Colonic mucosa (tissue), 4 donors: ENCODE measurements at regions of chr1 and their contacts with region 1.

Region 1: DNA sequence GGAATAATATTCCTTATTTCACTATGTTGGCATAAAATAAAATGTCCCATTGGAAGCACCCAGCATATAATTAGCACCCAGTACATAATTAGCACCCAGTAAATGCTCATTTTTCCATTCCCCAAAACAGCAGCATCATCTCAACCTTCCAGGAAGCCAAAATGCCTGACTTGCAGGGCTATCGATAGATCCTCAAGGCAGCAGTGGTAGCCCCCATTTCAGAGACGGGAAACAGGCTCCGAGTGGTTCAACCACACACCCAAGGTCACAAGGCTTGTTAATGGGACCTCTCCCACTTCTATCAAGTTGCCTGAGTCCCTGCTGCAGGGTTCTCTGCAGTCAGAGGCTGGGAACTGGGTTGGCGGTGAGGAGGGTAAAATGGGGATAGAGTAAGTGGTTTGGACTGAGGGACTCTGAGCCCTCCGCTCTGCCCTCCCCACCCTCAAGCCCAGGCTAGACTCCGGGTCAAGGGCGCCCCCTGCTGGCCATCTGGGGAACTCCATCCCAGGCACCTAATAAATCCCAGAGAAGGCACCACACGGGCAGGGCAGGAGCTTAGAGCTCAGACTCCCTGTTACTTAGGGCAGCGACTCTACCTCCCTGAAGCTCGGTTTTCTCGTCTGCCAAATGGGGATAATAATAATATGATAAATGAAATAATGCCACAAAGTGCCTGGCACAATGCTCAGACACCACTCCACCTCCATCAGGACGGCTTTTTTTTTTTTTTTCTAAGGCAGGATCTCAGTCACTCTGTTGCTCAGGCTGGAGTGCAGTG is 21.9 kb upstream of the LAPTM5 start:
- DNase-seq: peak; percentile 90
- H3K4me3 ChIP-seq: no peak overlapping the region
- H3K27ac ChIP-seq: no peak overlapping the region
- H3K4me1 ChIP-seq: no peaks in the 10 kb centered on the region
- H3K27me3 ChIP-seq: no peaks in the 10 kb centered on the region
- CTCF ChIP-seq: peak; percentile 98

Region 2: GRCh38 chr1:30718636-30719405 is 60.7 kb before region 1 on chr1:
- intact Hi-C with region 1: loop called (anchors 2 kb)
- DNase-seq: peak; percentile 88
- H3K4me3 ChIP-seq: peak overlapping the region; percentile 47
- H3K27ac ChIP-seq: peak overlapping the region; percentile 95
- H3K4me1 ChIP-seq: peaks cover 5% of the 10 kb centered on the region
- H3K27me3 ChIP-seq: no peaks in the 10 kb centered on the region
- CTCF ChIP-seq: peak; percentile 94

Region 3: GRCh38 chr1:30942326-30942963 is 163.0 kb after region 1 on chr1:
- intact Hi-C with region 1: no loop called
- DNase-seq: no peak
- H3K4me3 ChIP-seq: no peak overlapping the region
- H3K27ac ChIP-seq: no peak overlapping the region
- H3K4me1 ChIP-seq: no peaks in the 10 kb centered on the region
- H3K27me3 ChIP-seq: no peaks in the 10 kb centered on the region
- CTCF ChIP-seq: no peak